ENCODE measurements at regions of chr11 and their contacts with region 1.

Region 1: DNA sequence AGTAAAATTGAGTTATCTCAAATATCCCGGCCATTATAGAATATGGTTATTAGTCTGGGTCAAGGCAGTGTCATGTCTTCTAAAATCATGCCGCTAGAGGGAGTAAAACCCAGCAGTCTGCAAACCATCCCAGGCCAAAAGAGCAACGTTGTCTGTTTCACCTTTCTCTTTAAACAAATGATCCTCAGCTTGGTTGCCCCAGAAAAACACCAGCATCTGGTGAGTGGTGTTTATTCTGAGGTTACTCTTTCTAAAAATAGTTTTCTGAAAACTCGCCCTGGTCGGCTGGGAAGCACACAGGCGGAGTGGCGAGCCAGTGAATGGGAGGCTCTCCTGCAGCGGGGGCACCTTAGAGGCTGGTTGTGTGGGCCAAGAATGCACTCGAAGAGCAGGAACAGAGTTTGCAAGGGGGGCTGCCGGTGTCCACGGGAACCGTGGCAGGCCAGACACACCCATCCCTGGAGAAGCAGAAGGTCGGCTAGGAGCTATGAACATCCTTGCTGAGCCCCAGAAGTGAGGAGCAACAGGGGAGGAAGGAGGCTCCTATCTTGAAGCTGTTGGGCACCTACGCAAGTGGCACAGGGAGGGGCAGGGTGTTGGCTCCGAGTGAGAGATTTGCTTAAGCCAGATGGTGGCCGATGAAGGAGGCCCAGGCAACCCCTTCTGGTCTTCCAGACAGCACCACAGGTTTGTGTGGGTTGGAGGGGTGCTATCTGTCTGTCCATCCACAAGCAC is 297.1 kb downstream of the ETS1 start:
- DNase-seq: peak in 1 of 2 donors; percentile 76
- H3K4me3 ChIP-seq: peak overlapping the region in 1 of 2 donors; percentile 39
- H3K27ac ChIP-seq: peak overlapping the region in 1 of 2 donors; percentile 36
- H3K4me1 ChIP-seq: peaks cover 7 to 34% of the 10 kb centered on the region in 2 donors
- H3K27me3 ChIP-seq: no peaks in the 10 kb centered on the region
- CTCF ChIP-seq: peak; percentile 81 to 89 (median 87)

Region 2: GRCh38 chr11:127338380-127339259 is 951.7 kb before region 1 on chr11:
- intact Hi-C with region 1: no loop called
- DNase-seq: no peak
- H3K4me3 ChIP-seq: no peak overlapping the region
- H3K27ac ChIP-seq: no peak overlapping the region
- H3K4me1 ChIP-seq: no peaks in the 10 kb centered on the region
- H3K27me3 ChIP-seq: no peaks in the 10 kb centered on the region
- CTCF ChIP-seq: no peak

Region 3: GRCh38 chr11:128157423-128158298 is 132.6 kb before region 1 on chr11:
- intact Hi-C with region 1: loop called (anchors 5 kb)
- DNase-seq: peak in 1 of 2 donors; percentile 66
- H3K4me3 ChIP-seq: peak overlapping the region in 1 of 2 donors; percentile 35
- H3K27ac ChIP-seq: no peak overlapping the region
- H3K4me1 ChIP-seq: peaks cover 0 to under 1% of the 10 kb centered on the region in 2 donors
- H3K27me3 ChIP-seq: no peaks in the 10 kb centered on the region
- CTCF ChIP-seq: peak; percentile 76 to 81 (median 80)

Region 4: GRCh38 chr11:128208329-128209137 is 81.7 kb before region 1 on chr11:
- intact Hi-C with region 1: loop called (anchors 5 kb)
- DNase-seq: peak in 1 of 2 donors; percentile 76
- H3K4me3 ChIP-seq: no peak overlapping the region
- H3K27ac ChIP-seq: peak overlapping the region; percentile 55 to 77
- H3K4me1 ChIP-seq: peaks cover 4 to 36% of the 10 kb centered on the region in 2 donors
- H3K27me3 ChIP-seq: no peaks in the 10 kb centered on the region
- CTCF ChIP-seq: no peak

Region 5: GRCh38 chr11:128318856-128319474 is 28.7 kb after region 1 on chr11:
- intact Hi-C with region 1: no loop called
- DNase-seq: no peak
- H3K4me3 ChIP-seq: no peak overlapping the region
- H3K27ac ChIP-seq: no peak overlapping the region
- H3K4me1 ChIP-seq: no peaks in the 10 kb centered on the region
- H3K27me3 ChIP-seq: no peaks in the 10 kb centered on the region
- CTCF ChIP-seq: no peak

Region 6: GRCh38 chr11:128379587-128380580 is 89.6 kb after region 1 on chr11:
- intact Hi-C with region 1: no loop called
- DNase-seq: no peak
- H3K4me3 ChIP-seq: no peak overlapping the region
- H3K27ac ChIP-seq: no peak overlapping the region
- H3K4me1 ChIP-seq: no peaks in the 10 kb centered on the region
- H3K27me3 ChIP-seq: no peaks in the 10 kb centered on the region
- CTCF ChIP-seq: no peak

Region 7: DNA sequence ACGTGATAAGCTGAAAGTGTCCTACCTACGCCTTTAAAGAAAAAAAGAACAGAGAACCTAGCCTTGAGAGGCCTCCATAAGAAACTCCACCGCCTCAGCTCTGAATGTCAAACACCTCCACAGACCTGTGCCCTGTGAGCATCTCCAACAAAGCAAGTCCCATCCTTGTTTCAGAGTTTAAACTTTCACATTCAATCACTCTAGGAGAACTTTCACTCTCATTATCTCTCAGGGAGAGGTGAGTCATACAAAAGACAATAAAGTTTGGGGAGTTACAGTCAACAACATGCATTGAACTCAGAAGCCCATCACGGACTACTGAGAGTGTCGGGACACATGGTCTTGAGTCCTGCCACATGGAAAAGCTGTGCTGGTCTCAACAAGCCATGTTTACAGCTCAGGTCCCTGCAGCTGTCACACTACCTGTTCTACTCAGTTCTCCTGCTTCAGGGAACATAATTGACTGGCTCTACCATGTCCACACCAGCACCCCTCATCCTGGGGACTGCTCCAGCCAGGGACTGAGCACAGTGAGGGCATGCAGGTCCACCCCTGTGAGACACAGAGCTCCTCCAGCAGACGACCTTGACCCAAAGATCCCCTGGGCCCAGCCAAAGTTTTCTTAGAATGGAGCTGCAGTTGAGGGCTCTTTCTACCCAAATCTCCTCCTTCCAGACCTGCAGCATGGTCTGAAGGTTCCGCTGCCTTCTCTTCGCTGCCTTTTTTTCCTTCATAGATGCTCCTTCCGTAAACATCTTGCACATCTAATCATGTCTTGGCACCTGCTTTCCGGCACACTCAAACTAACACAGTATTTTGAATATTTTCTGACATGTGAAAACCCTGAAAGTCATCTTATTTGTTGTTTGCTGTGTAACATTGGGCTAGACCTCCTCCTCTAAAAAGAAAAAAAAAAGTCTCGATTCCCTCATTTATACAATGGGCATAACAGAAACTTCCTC is 182.1 kb after region 1 on chr11:
- intact Hi-C with region 1: loop called (anchors 5 kb)
- DNase-seq: no peak
- H3K4me3 ChIP-seq: no peak overlapping the region
- H3K27ac ChIP-seq: peak overlapping the region in 1 of 2 donors; percentile 18
- H3K4me1 ChIP-seq: peaks cover 6 to 20% of the 10 kb centered on the region in 2 donors
- H3K27me3 ChIP-seq: no peaks in the 10 kb centered on the region
- CTCF ChIP-seq: no peak

Region 8: DNA sequence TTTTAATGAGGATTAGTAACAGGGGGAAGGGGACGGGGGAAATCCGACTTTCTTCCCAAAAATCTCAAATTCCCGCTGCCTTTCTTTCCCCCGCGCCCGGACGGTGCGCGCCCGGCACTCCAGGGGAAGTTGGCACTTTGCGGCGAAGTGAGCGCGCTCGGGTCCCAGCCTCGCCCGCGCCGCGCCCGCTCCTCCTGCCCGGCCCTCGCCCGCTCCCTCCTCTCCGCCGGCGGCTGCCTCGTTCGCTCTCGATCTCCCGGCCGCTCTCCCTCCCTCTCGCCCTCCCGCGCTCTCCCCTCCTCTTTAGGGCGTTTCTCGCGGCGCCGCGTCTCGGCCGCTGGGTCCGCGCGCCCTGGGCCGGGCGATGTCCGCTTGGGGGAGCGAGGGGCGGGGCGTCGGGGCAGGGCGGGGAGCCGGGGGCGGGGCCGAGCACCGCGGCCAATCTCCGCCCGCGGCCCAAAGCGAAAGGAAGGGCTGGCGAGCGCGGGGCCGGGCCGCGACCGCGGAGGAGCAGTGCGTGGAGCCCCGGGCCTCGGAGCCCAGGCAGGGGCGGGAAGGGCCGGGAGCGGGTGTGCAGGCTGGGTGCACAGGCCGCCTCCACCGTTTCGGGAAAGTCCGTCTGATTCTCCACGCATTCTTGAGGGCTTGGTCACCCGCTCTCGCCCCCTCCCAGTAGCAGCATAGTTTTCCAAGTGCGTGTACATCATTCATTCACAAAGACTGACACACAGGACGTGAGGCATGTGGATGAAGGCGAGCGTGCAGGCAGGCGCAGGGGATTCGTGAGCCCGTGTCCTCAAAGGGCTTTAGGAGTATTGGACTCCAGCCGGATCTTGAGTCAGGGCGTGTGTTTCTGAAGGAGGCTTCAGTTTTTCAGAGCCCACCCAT is 232.0 kb after region 1 on chr11:
- intact Hi-C with region 1: loop called (anchors 5 kb)
- DNase-seq: peak; percentile 79 to 96
- H3K4me3 ChIP-seq: peak overlapping the region; percentile 84 to 86
- H3K27ac ChIP-seq: peak overlapping the region; percentile 96
- H3K4me1 ChIP-seq: peaks cover 9 to 38% of the 10 kb centered on the region in 2 donors
- H3K27me3 ChIP-seq: no peaks in the 10 kb centered on the region
- CTCF ChIP-seq: no peak

Region 9: GRCh38 chr11:128819198-128819597 is 528.9 kb after region 1 on chr11:
- intact Hi-C with region 1: no loop called
- DNase-seq: no peak
- H3K4me3 ChIP-seq: no peak overlapping the region
- H3K27ac ChIP-seq: no peak overlapping the region
- H3K4me1 ChIP-seq: no peaks in the 10 kb centered on the region
- H3K27me3 ChIP-seq: no peaks in the 10 kb centered on the region
- CTCF ChIP-seq: no peak

Region 10: GRCh38 chr11:128831174-128832120 is 541.2 kb after region 1 on chr11:
- intact Hi-C with region 1: loop called (anchors 1 kb)
- DNase-seq: peak; percentile 38 to 86
- H3K4me3 ChIP-seq: peak overlapping the region in 1 of 2 donors; percentile 13
- H3K27ac ChIP-seq: no peak overlapping the region
- H3K4me1 ChIP-seq: peaks cover 0 to 5% of the 10 kb centered on the region in 2 donors
- H3K27me3 ChIP-seq: no peaks in the 10 kb centered on the region
- CTCF ChIP-seq: peak; percentile 69 to 94 (median 78)